ENCODE measurements at regions of chr2 and their contacts with region 1.

Region 1: DNA sequence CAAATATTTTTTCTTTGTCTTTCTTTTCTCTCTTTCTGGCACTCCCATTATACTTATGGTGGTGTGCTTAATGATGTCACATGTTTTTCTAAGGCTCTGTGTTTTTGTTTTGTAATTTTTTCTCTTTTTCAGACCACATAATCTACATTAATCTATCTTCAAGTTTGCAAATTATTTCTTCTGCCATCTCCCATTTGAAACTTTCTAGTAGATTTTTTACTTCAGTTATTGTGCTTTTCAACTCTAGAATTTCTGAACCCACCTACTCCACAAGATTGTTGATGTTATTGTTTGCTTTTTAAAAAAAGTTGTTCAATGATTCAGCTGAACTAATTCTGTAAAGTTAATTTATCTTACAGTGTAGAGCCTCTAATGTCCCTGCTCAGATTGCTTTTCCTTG is 121.4 kb downstream of the SCN3A start:
- DNase-seq: no peak
- H3K4me3 ChIP-seq: no peak overlapping the region
- H3K27ac ChIP-seq: no peak overlapping the region
- H3K4me1 ChIP-seq: no peaks in the 10 kb centered on the region
- H3K27me3 ChIP-seq: no peaks in the 10 kb centered on the region
- CTCF ChIP-seq: no peak
- POLR2A ChIP-seq: no peak

Region 2: GRCh38 chr2:165044505-165045303 is 37.8 kb before region 1 on chr2:
- intact Hi-C with region 1: loop called (anchors 5 kb)
- DNase-seq: no peak
- H3K4me3 ChIP-seq: no peak overlapping the region
- H3K27ac ChIP-seq: no peak overlapping the region
- H3K4me1 ChIP-seq: no peaks in the 10 kb centered on the region
- H3K27me3 ChIP-seq: no peaks in the 10 kb centered on the region
- CTCF ChIP-seq: no peak
- POLR2A ChIP-seq: no peak

Region 3: GRCh38 chr2:165144315-165144714 is 61.8 kb after region 1 on chr2:
- intact Hi-C with region 1: no loop called
- DNase-seq: no peak
- H3K4me3 ChIP-seq: no peak overlapping the region
- H3K27ac ChIP-seq: no peak overlapping the region
- H3K4me1 ChIP-seq: no peaks in the 10 kb centered on the region
- H3K27me3 ChIP-seq: no peaks in the 10 kb centered on the region
- CTCF ChIP-seq: no peak
- POLR2A ChIP-seq: no peak